Thyroid gland (tissue), 4 donors: ENCODE measurements at regions of chr3 and their contacts with region 1.

Region 1: DNA sequence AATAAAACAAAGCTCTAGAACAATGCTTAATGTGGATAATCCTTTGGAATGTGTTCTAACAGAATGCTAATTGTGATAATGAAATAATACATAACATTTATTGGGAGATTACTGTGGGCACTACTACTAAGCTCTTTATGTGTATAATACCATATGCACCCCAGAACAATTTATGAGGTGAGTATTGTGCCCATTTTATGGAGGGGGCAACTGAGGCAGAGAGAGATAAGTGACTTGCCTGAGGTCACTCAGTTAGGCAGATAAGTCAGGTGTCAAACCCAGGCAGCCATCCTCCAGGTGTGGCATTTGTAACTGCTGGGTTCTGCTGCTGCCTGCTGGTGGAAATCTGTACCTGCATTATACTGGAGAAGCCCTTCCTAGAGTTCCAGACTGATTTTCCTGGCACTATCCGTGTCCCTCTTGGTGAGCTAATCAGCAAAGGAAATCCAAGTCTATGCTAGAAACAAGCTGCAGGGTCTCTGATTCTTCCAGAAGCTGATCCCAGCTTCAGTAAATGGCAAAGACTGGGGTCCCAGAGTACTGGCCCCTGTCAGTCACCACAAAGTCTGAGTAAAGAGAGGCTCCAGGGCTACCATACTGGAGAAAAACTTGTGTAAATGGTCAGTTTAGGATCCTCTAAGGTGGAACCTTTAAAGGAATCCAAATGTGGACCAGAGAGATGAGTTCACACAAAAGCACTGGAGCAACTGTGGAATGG is 22.6 kb upstream of the RBP1 start:
- DNase-seq: peak; percentile 36 to 37
- H3K4me3 ChIP-seq: no peak overlapping the region
- H3K27ac ChIP-seq: no peak overlapping the region
- H3K4me1 ChIP-seq: no peaks in the 10 kb centered on the region
- H3K27me3 ChIP-seq: no peaks in the 10 kb centered on the region
- CTCF ChIP-seq: peak in 5 of 6 experiments; percentile 28 to 78 (median 54)
- POLR2A ChIP-seq: no peak

Region 2: GRCh38 chr3:139281096-139281495 is 281.0 kb before region 1 on chr3:
- intact Hi-C with region 1: no loop called
- DNase-seq: no peak
- H3K4me3 ChIP-seq: no peak overlapping the region
- H3K27ac ChIP-seq: no peak overlapping the region
- H3K4me1 ChIP-seq: peaks cover under 1 to 3% of the 10 kb centered on the region in 2 donors
- H3K27me3 ChIP-seq: no peaks in the 10 kb centered on the region
- CTCF ChIP-seq: no peak
- POLR2A ChIP-seq: no peak

Region 3: DNA sequence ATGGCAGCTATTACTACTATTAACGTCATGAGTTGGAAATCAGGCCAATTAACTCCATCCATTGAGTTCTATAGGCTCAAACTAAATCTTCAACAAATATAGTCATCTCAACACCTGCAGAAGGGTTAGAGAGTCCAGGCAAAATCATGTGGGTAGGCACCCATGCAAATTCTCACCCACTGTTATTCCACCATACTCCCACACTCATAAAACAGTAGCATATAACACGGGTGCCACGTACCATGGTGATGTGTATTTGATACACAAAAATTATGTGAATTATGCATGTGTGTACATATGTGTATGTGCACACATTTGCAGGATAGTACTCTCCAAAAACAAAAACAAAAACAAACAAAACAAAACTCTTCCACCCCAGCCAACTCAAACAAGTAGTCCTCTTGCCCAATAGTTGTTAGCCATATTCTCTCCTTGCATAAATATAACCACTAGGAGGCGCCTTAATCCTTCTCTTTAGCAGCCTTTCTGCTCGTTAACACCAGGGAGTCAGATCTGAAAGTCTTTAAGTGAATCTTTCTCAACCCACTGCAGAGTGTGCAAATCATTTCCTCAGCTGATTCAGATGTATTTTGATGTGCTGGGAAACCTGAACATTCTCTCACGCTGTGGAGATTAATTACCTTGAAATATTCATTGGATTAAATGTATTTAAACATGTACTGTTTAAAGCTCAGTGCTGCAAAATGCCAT is 134.7 kb before region 1 on chr3:
- intact Hi-C with region 1: loop called (anchors 5 kb)
- DNase-seq: no peak
- H3K4me3 ChIP-seq: no peak overlapping the region
- H3K27ac ChIP-seq: no peak overlapping the region
- H3K4me1 ChIP-seq: no peaks in the 10 kb centered on the region
- H3K27me3 ChIP-seq: no peaks in the 10 kb centered on the region
- CTCF ChIP-seq: peak; percentile 27 to 86 (median 75)
- POLR2A ChIP-seq: no peak

Region 4: GRCh38 chr3:139506766-139507165 is 55.4 kb before region 1 on chr3:
- intact Hi-C with region 1: no loop called
- DNase-seq: no peak
- H3K4me3 ChIP-seq: no peak overlapping the region
- H3K27ac ChIP-seq: no peak overlapping the region
- H3K4me1 ChIP-seq: no peaks in the 10 kb centered on the region
- H3K27me3 ChIP-seq: no peaks in the 10 kb centered on the region
- CTCF ChIP-seq: no peak
- POLR2A ChIP-seq: no peak

Region 5: DNA sequence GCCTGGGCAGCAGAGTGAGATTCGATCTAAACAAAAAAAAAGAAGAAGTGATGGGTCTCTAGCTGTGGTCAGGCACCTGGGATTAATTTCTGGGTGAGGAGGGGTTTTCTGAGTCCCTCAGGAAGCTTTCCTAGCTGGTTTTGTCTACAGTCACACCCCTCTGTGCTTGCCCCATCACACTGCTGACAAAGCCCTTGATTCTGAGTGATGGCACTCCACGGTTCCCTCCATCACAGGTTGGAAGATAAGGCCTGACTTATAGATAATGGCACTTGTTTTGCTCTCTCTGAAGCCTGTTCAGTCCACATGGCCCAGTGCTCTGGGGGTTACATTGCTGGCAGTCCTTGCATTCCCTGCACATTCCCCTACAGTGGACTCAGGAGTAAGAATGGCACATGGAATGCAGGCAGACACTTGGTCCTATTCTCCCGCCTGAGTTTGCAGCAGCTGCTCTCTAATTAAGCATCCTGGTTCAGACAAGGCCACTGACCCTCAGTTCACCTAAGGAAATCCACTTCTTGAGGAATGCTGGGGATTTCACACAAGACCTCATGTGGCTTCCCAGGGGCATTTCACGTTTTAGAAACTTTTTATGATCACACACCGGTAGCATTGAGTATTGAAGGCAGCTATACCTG is 196.7 kb after region 1 on chr3:
- intact Hi-C with region 1: no loop called
- DNase-seq: no peak
- H3K4me3 ChIP-seq: no peak overlapping the region
- H3K27ac ChIP-seq: no peak overlapping the region
- H3K4me1 ChIP-seq: no peaks in the 10 kb centered on the region
- H3K27me3 ChIP-seq: no peaks in the 10 kb centered on the region
- CTCF ChIP-seq: no peak
- POLR2A ChIP-seq: no peak